Esophagus muscularis mucosa (tissue), 4 donors: ENCODE measurements at regions of chr22 and their contacts with region 1.

Region 1: DNA sequence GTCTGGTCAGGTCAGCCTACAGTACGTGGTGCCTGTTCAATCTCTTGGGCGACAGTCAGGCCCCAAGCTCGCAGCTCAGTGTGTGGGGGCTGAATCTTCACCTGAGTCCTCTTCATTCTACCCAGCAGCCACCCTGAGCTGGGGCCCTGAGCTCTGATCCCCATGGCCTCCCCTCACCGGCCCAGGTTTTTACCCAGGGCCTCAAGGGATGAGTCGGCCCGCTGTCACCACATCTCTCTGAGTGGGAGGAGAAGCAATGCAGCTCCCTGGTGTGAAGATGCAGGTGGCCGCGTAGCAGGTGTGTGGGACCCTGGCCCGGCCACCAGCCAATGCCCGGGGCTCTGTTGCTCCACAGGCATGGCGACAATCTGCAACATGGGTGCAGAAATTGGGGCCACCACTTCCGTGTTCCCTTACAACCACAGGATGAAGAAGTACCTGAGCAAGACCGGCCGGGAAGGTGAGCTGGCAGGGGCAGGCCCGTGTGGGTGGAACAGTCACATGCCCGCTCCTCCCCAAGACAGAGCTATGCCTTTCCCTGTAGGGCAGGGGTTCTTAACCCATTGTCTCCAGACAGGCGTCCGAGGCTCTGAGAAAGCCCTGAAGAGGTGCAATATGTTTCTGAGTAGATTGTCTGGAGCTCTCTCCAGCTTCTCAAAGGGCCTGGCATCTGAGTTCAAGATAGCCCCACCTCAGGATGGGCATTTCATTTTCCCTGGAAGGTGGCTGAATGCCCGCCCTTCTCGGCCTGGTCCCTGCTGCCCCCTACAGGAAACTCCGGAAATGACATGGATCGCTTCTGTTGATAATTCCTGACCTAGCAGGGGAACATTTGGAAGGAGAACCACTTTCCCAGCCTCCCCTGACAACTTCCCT is 26.9 kb downstream of the POLR3H start:
- DNase-seq: peak; percentile 94
- H3K4me3 ChIP-seq: no peak overlapping the region
- H3K27ac ChIP-seq: peak overlapping the region; percentile 69 to 80 (median 76)
- H3K4me1 ChIP-seq: peaks cover 18 to 35% (median 30%) of the 10 kb centered on the region in 4 donors
- H3K27me3 ChIP-seq: no peaks in the 10 kb centered on the region
- CTCF ChIP-seq: peak; percentile 83 to 94 (median 94)
- EP300 ChIP-seq: no peak
- POLR2A ChIP-seq: no peak

Region 2: GRCh38 chr22:41403532-41404318 is 113.7 kb before region 1 on chr22:
- intact Hi-C with region 1: loop called (anchors 2 kb)
- DNase-seq: peak; percentile 95
- H3K4me3 ChIP-seq: no peak overlapping the region
- H3K27ac ChIP-seq: peak overlapping the region; percentile 53 to 68 (median 64)
- H3K4me1 ChIP-seq: peaks cover 26 to 43% (median 34%) of the 10 kb centered on the region in 4 donors
- H3K27me3 ChIP-seq: no peaks in the 10 kb centered on the region
- CTCF ChIP-seq: peak; percentile 98 to 99 (median 98)
- EP300 ChIP-seq: no peak
- POLR2A ChIP-seq: no peak

Region 3: GRCh38 chr22:41471568-41471967 is 45.8 kb before region 1 on chr22:
- intact Hi-C with region 1: loop called (anchors 5 kb)
- DNase-seq: no peak
- H3K4me3 ChIP-seq: no peak overlapping the region
- H3K27ac ChIP-seq: peak overlapping the region; percentile 0 to 95 (median 24)
- H3K4me1 ChIP-seq: peaks cover 67 to 88% (median 84%) of the 10 kb centered on the region in 4 donors
- H3K27me3 ChIP-seq: no peaks in the 10 kb centered on the region
- CTCF ChIP-seq: no peak
- EP300 ChIP-seq: no peak
- POLR2A ChIP-seq: no peak

Region 4: GRCh38 chr22:41479671-41480396 is 37.6 kb before region 1 on chr22:
- intact Hi-C with region 1: loop called (anchors 5 kb)
- DNase-seq: no peak
- H3K4me3 ChIP-seq: no peak overlapping the region
- H3K27ac ChIP-seq: peak overlapping the region; percentile 82 to 95 (median 86)
- H3K4me1 ChIP-seq: peaks cover 71 to 97% (median 95%) of the 10 kb centered on the region in 4 donors
- H3K27me3 ChIP-seq: no peaks in the 10 kb centered on the region
- CTCF ChIP-seq: peak in 1 of 3 experiments; percentile 34
- EP300 ChIP-seq: no peak
- POLR2A ChIP-seq: no peak

Region 5: DNA sequence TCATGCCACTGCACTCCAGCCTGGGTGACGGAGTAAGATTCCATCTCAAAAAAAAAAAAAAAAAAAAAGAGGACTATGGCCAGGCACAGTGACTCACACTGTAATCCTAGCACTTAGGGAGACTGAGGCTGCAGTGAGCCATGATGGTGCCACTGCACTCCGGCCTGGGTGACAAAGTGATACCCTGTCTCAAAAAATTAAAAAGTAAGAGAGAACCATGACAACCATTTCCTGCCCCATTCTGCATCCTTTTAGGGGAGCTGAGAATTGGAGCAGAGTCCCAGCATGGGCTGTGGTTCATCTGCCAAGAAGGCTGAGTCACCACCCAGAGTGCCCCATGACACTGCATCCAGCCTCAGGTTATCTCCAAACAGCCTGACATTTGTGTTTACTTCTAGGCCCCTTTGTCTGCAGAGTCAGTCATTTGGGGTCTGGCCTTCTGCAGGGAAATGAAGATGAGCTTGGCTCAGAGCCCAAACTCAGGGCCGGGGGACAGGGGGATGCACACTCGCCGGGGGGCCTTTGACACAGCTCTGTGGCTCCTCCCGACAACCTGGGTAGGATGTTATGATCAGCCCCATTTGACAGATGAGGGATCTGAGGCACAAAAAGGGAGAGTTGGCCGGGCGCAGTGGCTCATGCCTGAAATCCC is 48.1 kb after region 1 on chr22:
- intact Hi-C with region 1: no loop called
- DNase-seq: no peak
- H3K4me3 ChIP-seq: no peak overlapping the region
- H3K27ac ChIP-seq: peak overlapping the region; percentile 56 to 74 (median 66)
- H3K4me1 ChIP-seq: peaks cover 25 to 63% (median 57%) of the 10 kb centered on the region in 4 donors
- H3K27me3 ChIP-seq: no peaks in the 10 kb centered on the region
- CTCF ChIP-seq: no peak
- EP300 ChIP-seq: no peak
- POLR2A ChIP-seq: no peak